Vagina (tissue), 2 donors: ENCODE measurements at regions of chr3 and their contacts with region 1.

Region 1: DNA sequence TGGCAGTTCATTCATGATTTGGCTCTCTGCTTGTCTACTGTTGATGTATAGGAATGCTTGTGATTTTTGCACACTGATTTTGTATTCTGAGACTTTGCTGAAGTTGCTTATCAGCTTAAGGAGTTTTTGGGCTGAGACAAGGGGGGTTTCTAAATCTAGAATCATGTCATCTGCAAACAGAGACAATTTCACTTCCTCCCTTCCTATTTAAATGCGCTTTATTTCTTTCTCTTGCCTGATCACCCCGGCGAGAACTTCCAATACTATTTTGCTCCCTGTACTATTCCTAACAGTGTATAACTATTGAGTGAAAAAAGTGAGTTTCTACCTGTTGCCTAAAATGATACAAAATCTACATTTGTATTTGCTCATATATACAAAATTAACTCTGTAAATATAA is 128.3 kb downstream of the ULK4 start:
- DNase-seq: no peak
- H3K4me3 ChIP-seq: no peak overlapping the region
- H3K27ac ChIP-seq: no peak overlapping the region
- H3K4me1 ChIP-seq: peaks cover 5% of the 10 kb centered on the region
- H3K27me3 ChIP-seq: no peaks in the 10 kb centered on the region
- CTCF ChIP-seq: no peak
- POLR2A ChIP-seq: no peak

Region 2: DNA sequence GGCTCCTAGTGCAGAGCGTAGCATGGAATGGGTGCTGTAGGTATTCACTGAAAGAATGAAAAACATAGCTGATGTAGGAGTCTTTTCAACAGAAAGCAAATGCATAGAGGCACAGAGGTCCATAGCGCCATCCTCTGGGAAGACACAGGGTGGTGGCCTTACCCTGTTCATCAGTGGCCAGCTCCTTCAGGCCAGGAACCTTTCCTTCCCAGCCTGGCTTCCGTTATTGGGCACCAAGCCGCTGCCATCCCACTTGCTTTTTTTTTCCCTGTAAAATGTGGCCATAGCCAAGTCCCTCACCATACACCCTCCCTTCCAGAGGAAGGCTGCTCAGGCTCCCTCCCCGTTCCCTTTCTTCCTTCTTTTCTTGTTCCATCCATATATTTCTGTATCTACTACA is 1190.8 kb before region 1 on chr3:
- intact Hi-C with region 1: no loop called
- DNase-seq: peak in 1 of 2 donors; percentile 43
- H3K4me3 ChIP-seq: no peak overlapping the region
- H3K27ac ChIP-seq: no peak overlapping the region
- H3K4me1 ChIP-seq: no peaks in the 10 kb centered on the region
- H3K27me3 ChIP-seq: no peaks in the 10 kb centered on the region
- CTCF ChIP-seq: no peak
- POLR2A ChIP-seq: no peak

Region 3: DNA sequence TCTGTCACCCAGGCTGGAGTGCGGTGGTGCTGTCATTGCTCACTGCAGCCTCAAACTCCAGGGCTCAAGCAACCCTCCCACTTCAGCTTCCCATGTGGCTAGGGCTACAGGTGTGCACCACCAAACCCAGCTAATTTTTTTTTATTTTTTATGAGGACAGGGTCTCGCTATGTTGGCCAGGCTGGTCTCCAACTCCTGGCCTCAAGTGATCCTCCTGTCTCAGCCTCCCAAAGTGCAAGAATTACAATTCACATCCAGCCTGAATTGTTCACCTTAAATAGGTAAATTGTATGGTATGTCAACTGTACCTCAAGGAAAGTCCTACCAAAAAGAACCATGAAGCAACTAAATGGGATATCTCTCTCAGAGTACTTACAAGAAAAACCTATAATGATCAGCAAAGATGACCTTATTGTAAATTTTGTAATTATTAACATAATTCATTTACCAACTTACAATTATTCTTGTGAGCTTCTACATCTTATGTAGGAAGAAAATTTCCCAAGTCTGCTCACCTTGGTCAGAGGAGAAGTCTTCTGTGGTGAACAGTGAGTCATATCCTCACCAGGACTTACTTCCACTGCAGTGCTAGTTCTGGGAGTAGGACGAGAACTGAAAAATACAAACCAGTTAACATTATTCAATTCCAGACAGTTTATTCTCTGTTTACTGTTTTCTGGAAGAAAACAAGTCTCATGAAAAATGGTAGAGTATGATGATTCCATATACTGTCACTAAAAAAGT is 73.9 kb after region 1 on chr3:
- intact Hi-C with region 1: no loop called
- DNase-seq: no peak
- H3K4me3 ChIP-seq: no peak overlapping the region
- H3K27ac ChIP-seq: no peak overlapping the region
- H3K4me1 ChIP-seq: no peaks in the 10 kb centered on the region
- H3K27me3 ChIP-seq: no peaks in the 10 kb centered on the region
- CTCF ChIP-seq: no peak
- POLR2A ChIP-seq: no peak

Region 4: DNA sequence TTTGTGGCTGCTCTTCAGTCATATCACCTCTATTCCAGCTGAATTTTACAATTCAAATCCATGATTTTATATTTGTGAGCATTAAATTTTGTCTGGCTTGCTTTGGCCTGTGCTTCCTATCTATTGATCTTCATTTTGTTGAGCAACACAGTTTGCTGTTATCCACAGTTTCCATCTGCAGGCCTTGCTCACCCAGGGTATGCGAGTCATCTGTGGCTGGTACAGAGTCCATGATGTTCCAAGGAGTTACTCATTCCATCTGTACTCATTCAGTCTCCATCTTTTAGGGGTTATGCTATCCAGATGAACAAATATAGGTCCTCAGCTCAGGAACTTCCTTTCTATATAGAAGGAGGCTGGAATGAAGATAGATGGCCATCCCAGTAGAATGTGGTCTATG is 502.5 kb after region 1 on chr3:
- intact Hi-C with region 1: loop called (anchors 5 kb)
- DNase-seq: no peak
- H3K4me3 ChIP-seq: no peak overlapping the region
- H3K27ac ChIP-seq: no peak overlapping the region
- H3K4me1 ChIP-seq: no peaks in the 10 kb centered on the region
- H3K27me3 ChIP-seq: no peaks in the 10 kb centered on the region
- CTCF ChIP-seq: no peak
- POLR2A ChIP-seq: no peak